Natural killer cell (primary cell): ENCODE measurements at regions of chr3 and their contacts with region 1.

Region 1: DNA sequence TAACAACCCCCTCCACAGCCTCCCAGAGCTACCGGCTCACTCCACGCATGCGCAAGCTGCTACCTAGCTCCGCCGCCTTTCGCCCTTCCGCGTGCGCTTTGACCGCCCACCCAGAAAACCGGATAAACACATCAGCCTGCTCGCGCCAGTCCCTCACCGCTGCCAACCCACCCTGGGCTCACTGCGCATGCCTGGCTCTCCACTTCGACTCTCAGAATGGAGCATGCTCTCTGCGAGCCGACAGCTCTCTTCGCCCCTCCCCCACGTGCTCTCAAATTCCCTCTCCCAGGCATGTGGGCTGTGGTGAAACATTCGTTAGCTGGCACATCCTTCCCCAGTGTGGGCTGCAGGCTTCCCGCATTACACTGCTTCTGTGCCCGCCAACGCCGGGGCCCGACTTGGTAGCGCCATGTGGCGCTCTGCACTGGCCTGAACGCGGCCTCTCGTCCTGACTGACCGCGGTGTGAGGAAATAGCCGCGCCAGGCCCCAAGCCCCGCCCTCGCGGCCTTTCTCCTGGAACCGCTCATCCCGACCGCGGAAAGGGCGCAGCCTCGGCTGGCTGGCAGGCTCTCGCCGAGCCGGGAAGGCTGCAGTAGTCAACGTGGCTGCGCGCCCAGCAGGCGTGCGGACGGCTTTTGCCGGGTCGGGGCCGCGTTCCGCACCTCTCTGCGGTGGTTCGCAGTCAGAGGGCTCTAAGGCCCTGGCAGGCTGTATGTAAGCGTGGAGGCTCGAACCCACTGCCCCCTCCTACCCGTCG is 445 bp upstream of the MSL2 start:
- DNase-seq: peak; percentile 94 to 99
- ATAC-seq: peak; percentile 62 to 76 (median 68)
- H3K4me3 ChIP-seq: peak overlapping the region; percentile 56
- H3K4me3 Mint-ChIP-seq: peak overlapping the region; percentile 99
- H3K27ac ChIP-seq: peak overlapping the region; percentile 99
- H3K27ac Mint-ChIP-seq: peak overlapping the region; percentile 98
- H3K4me1 ChIP-seq: peaks cover 8% of the 10 kb centered on the region
- H3K4me1 Mint-ChIP-seq: peaks cover 59 to 60% of the 10 kb centered on the region in 2 donors
- H3K27me3 ChIP-seq: no peaks in the 10 kb centered on the region
- H3K27me3 Mint-ChIP-seq: peaks cover 0 to 5% of the 10 kb centered on the region in 2 donors
- CTCF ChIP-seq: no peak

Region 2: DNA sequence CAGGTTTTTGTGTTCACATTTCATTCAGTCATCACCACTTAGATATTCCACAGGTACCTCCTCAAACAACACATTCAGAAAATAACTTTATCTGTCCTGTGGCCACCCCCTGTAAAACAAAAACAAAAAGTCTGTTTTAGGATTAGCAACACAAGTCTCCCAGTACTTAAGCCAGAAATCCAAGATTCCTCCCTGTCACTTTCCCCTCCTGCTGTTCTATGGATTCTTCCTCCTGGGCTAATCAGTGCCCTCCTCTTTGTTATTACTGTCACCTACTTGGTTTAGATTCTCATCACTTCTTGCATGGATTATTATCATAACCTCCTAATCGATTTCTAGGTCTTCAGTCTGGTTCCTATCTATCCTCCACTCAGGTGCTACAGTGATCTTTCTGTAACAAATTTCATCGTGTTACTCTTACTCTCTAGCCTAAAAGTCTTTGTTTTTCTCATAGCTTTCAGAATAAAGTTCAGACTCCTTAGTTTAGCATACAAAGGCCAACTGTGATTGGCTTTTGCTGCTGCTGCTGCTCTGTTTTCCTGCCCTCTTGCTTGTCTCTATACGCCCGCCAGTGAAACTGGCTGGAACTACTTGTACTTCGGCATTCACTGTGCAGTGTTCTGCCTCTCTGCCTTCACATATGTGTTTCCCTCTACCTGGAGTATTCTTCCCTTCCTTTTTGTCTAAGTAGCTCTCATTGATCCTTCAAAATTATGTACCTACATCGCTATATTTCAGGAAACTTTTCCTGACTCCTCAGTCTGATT is 198.8 kb before region 1 on chr3:
- intact Hi-C with region 1: no loop called
- DNase-seq: no peak
- ATAC-seq: no peak
- H3K4me3 ChIP-seq: no peak overlapping the region
- H3K4me3 Mint-ChIP-seq: no peak overlapping the region
- H3K27ac ChIP-seq: no peak overlapping the region
- H3K27ac Mint-ChIP-seq: no peak overlapping the region
- H3K4me1 ChIP-seq: no peaks in the 10 kb centered on the region
- H3K4me1 Mint-ChIP-seq: no peaks in the 10 kb centered on the region
- H3K27me3 ChIP-seq: peaks cover 2% of the 10 kb centered on the region
- H3K27me3 Mint-ChIP-seq: peaks cover 14 to 21% of the 10 kb centered on the region in 2 donors
- CTCF ChIP-seq: no peak

Region 3: DNA sequence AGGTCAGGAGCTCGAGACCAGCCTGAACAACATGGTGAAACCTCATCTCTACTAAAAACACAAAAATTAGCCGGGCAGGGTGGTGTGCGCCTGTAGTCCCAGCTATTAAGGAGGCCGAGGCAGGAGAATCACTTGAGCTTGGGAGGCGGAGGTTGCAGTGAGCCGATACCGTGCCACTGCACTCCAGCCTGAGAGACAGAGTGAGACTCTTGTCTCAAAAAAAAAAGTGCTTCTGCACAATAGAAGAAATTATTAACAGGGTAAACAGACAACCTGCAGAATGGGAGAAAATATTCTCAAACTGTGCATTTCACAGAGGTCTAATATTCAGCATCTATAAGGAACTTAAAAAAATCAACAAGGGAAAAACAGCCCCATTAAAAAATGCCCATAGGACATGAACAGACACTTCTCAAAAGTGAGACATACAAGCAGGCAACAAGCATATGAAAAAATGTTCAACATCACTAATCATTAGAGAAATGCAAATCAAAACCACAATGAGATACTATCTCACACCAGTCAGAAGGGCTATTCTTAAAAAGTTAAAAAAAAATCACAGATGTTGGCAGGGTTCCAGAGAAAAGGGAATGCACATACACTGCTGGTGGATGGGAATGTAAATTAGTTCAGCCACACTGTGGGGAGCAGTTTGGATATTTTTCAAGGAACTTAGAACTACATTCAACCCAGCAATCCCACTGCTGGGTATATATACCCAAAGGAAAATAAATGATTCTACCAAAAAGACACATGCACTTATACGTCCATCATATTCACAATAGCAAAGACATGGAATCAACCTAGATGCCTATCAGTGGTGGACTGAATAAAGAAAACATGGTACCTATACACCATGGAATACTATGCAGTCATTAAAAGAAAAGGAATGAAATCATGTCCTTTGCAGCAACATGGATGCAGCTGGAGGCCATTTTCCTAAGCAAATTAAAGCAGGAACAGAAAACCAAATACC is 75.9 kb before region 1 on chr3:
- intact Hi-C with region 1: no loop called
- DNase-seq: no peak
- ATAC-seq: no peak
- H3K4me3 ChIP-seq: no peak overlapping the region
- H3K4me3 Mint-ChIP-seq: no peak overlapping the region
- H3K27ac ChIP-seq: no peak overlapping the region
- H3K27ac Mint-ChIP-seq: no peak overlapping the region
- H3K4me1 ChIP-seq: no peaks in the 10 kb centered on the region
- H3K4me1 Mint-ChIP-seq: peaks cover 0 to 2% of the 10 kb centered on the region in 2 donors
- H3K27me3 ChIP-seq: no peaks in the 10 kb centered on the region
- H3K27me3 Mint-ChIP-seq: no peaks in the 10 kb centered on the region
- CTCF ChIP-seq: no peak

Region 4: DNA sequence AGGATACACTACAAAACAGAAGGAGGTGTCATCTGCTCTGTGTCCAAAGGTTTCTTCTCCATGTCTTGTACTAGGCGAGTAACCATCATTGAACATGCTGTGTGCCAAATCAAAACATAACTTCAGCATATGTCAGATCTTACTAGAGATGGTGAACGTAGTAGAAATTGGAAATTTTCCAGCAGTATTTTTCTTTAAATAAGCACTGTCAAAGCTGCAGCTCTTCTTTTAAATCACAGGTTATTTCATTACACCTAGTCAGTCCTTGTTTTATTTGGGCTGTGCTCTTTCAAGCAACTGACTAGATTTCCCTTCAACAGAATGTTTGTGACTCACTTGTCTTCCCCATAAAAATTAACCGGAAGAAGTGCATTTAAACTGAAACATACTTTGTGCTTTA is 46.9 kb before region 1 on chr3:
- intact Hi-C with region 1: loop called (anchors 5 kb)
- DNase-seq: no peak
- ATAC-seq: no peak
- H3K4me3 ChIP-seq: no peak overlapping the region
- H3K4me3 Mint-ChIP-seq: no peak overlapping the region
- H3K27ac ChIP-seq: no peak overlapping the region
- H3K27ac Mint-ChIP-seq: peak overlapping the region; percentile 64 to 75
- H3K4me1 ChIP-seq: peaks cover 9% of the 10 kb centered on the region
- H3K4me1 Mint-ChIP-seq: peaks cover 70 to 80% of the 10 kb centered on the region in 2 donors
- H3K27me3 ChIP-seq: no peaks in the 10 kb centered on the region
- H3K27me3 Mint-ChIP-seq: no peaks in the 10 kb centered on the region
- CTCF ChIP-seq: no peak

Region 5: GRCh38 chr3:136250226-136250902 is 53.8 kb after region 1 on chr3 and contains the start of gene PCCB:
- intact Hi-C with region 1: loop called (anchors 1 kb)
- DNase-seq: peak; percentile 87 to 94
- ATAC-seq: peak; percentile 93 to 98 (median 94)
- H3K4me3 ChIP-seq: peak within 1 kb of the TSS; percentile 58
- H3K4me3 Mint-ChIP-seq: peak within 1 kb of the TSS; percentile 90
- H3K27ac ChIP-seq: peak within 1 kb of the TSS; percentile 63
- H3K27ac Mint-ChIP-seq: peak within 1 kb of the TSS; percentile 90 to 93
- H3K4me1 ChIP-seq: peaks cover 14% of the 10 kb centered on the region
- H3K4me1 Mint-ChIP-seq: peaks cover 20 to 30% of the 10 kb centered on the region in 2 donors
- H3K27me3 ChIP-seq: no peaks in the 10 kb centered on the region
- H3K27me3 Mint-ChIP-seq: no peaks in the 10 kb centered on the region
- CTCF ChIP-seq: peak; percentile 89
- total RNA-seq, gene PCCB: 17.7 to 19.9 (median 17.8) TPM

Region 6: DNA sequence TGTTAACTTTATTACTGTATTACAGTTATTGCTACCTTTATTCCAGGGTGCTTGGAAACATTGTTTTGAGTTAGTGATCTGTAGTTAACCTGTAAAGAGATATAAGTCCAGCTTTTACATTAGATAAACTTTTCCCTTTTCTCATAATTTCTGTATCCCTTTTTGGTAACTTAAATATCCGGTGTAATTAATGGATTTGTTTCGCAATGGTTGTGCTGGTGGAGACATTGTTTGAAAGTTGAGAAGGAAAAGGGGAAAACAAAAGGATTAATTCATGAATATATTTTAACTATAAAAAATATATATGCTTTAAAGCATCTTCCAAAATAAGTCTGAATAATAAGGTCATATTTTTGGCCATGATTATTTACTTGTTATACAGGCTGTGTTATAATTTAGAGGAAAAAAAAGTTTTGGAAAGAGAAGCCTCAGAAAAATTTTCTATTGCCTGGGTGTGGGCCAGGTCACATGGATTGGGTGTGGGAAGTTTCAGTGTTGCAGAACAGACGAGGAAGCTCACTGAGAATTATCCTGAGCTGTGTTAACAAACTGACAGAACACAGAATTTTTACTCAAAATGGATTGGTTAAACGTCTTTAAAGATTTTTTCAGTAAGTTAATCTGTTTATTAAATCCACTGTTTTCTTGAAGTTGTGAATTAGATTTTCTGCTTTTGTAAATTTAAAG is 733.5 kb after region 1 on chr3:
- intact Hi-C with region 1: loop called (anchors 10 kb)
- DNase-seq: no peak
- ATAC-seq: no peak
- H3K4me3 ChIP-seq: no peak overlapping the region
- H3K4me3 Mint-ChIP-seq: no peak overlapping the region
- H3K27ac ChIP-seq: no peak overlapping the region
- H3K27ac Mint-ChIP-seq: peak overlapping the region; percentile 21 to 74
- H3K4me1 ChIP-seq: peaks cover 4% of the 10 kb centered on the region
- H3K4me1 Mint-ChIP-seq: peaks cover 53 to 64% of the 10 kb centered on the region in 2 donors
- H3K27me3 ChIP-seq: no peaks in the 10 kb centered on the region
- H3K27me3 Mint-ChIP-seq: no peaks in the 10 kb centered on the region
- CTCF ChIP-seq: no peak

Region 7: GRCh38 chr3:136938334-136938733 is 741.8 kb after region 1 on chr3:
- intact Hi-C with region 1: loop called (anchors 5 kb)
- DNase-seq: no peak
- ATAC-seq: peak in 2 of 3 donors; percentile 42 to 72
- H3K4me3 ChIP-seq: no peak overlapping the region
- H3K4me3 Mint-ChIP-seq: no peak overlapping the region
- H3K27ac ChIP-seq: no peak overlapping the region
- H3K27ac Mint-ChIP-seq: peak overlapping the region; percentile 80 to 86
- H3K4me1 ChIP-seq: peaks cover 20% of the 10 kb centered on the region
- H3K4me1 Mint-ChIP-seq: peaks cover 62 to 73% of the 10 kb centered on the region in 2 donors
- H3K27me3 ChIP-seq: no peaks in the 10 kb centered on the region
- H3K27me3 Mint-ChIP-seq: no peaks in the 10 kb centered on the region
- CTCF ChIP-seq: no peak